ENCODE measurements at regions of chr5 and their contacts with region 1.

Region 1: DNA sequence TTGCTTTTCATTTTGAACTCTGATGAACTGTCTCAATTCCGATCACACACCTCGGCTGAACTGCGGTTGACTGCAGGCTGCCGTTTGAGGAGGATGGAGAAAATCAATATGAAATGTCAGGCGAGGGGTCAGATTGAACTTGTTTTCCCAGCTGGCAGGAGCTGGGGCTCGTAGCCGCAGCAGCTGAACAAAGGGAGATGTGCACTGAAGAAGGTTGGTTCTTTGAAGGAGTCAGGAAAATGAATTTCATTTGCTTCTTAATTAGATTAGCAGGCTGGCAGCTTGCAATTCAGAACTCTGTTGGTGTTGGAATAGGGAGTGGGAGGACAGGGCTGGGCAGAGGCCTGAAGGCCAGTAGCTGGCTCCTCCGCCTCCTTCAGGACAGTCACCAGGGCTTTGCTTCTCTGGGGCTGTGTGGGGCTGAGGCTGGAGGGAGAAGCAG is 117.4 kb upstream of the GPR151 start:
- DNase-seq: no peak

Region 2: DNA sequence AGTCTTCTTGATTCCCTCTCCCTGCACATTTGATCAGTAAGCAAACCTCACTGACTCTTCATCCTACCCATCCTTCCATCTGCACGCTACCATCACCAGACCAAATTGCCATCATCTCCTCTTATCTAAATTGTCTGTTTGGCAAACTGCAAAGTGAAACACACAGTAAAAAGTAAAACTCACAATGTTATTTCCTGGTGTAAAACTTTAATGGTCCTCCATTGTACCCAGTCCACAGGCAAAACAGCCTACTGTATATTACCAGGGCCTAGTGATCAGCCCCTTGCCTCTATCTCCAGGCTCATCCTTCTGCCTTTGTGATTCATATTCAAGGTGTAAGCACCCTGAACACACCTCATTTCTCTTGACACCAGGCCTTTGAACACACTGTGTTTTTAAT is 34.1 kb before region 1 on chr5:
- intact Hi-C with region 1: loop called in 1 of 2 experiments (anchors 1 kb)
- DNase-seq: no peak

Region 3: GRCh38 chr5:146860213-146860893 is 227.0 kb after region 1 on chr5:
- intact Hi-C with region 1: no loop called
- DNase-seq: no peak

Region 4: DNA sequence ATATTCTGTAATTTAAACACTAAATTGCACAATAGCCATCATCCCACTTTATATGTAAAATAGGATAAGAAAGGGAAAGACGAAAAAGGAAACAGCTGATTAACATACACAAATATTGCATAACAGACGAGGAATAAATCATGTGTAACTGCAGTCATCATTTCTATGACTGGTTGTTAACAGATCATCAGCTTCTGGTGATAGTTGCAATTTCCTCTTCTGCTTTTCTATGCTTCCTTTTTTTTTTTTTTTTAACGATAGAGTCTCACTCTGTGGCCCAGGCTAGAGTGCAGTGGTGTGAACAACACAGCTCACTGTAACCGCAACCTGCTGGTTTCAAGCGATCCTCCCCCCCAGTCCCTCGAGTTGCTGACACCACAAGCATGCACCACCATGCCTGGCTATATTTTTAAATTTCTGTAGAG is 1171.7 kb after region 1 on chr5:
- intact Hi-C with region 1: no loop called
- DNase-seq: no peak